Activated T-helper 2 cell treated with anti-CD3 and anti-CD28 coated beads, Interferon-gamma antibody, Interleukin-2, Interleukin-4, amounts not matched to agents 10 μg/mL and 5 μg/mL and 100 μg/mL, durations not matched to agents 14 hours and 24 hours and 36 hours (primary cell): ENCODE measurements at regions of chr19 and their contacts with region 1.

Region 1: GRCh38 chr19:46913852-46914430 is 53.1 kb downstream of the ARHGAP35 start:
- DNase-seq: no peak
- H3K4me3 Mint-ChIP-seq: no peak overlapping the region
- H3K27ac Mint-ChIP-seq: no peak overlapping the region
- H3K4me1 Mint-ChIP-seq: peaks cover 37% of the 10 kb centered on the region
- H3K27me3 Mint-ChIP-seq: no peaks in the 10 kb centered on the region

Region 2: GRCh38 chr19:46967578-46968027 is 53.7 kb after region 1 on chr19:
- intact Hi-C with region 1: loop called (anchors 10 kb)
- DNase-seq: no peak
- H3K4me3 Mint-ChIP-seq: peak overlapping the region; percentile 57
- H3K27ac Mint-ChIP-seq: peak overlapping the region; percentile 73
- H3K4me1 Mint-ChIP-seq: peaks cover 33% of the 10 kb centered on the region
- H3K27me3 Mint-ChIP-seq: no peaks in the 10 kb centered on the region

Region 3: DNA sequence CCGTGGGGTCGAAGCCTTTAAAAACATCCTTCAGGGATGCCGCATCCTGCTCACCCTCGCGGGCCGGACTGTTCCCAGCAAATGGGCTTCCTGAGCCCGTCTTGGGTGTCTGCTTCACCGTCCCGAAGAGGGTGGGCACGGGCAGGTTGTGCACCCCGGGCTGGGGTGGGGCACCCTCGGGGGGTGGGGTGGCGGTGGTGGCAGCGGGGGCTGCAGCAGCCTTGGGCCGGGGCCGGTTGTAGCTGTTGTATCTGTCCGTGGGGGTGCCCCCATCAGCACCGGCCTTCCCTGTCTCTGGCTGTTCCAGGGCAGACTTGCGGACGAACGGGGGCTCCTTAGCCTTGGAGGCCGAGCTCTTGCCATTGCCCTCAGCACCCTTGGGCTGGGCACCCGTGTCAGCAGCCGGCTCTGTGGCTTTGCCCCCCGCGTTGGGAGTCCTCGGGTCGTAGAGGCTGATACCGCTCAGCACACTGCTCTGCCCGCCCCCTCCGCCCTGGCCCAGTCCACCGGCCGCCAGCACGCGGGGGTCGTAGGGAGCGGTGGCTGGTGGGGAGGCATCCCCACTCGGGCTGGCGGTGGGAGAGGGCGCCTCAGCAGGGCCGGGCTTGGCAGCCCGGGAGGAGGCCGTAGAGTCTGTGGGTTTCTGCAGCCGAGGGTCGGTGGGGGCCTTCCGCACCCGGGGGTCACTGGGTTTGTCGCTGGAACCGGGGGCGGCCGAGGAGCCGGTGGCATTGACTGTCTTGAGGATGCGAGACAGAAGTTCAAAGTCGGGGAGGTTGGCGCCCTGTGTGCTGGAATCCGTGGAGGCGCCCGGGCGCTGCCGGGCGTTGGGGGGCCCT is 152.7 kb after region 1 on chr19:
- intact Hi-C with region 1: no loop called
- DNase-seq: no peak
- H3K4me3 Mint-ChIP-seq: no peak overlapping the region
- H3K27ac Mint-ChIP-seq: no peak overlapping the region
- H3K4me1 Mint-ChIP-seq: no peaks in the 10 kb centered on the region
- H3K27me3 Mint-ChIP-seq: no peaks in the 10 kb centered on the region